CD4-positive, alpha-beta memory T cell (primary cell): ENCODE measurements at regions of chr7 and their contacts with region 1.

Region 1: DNA sequence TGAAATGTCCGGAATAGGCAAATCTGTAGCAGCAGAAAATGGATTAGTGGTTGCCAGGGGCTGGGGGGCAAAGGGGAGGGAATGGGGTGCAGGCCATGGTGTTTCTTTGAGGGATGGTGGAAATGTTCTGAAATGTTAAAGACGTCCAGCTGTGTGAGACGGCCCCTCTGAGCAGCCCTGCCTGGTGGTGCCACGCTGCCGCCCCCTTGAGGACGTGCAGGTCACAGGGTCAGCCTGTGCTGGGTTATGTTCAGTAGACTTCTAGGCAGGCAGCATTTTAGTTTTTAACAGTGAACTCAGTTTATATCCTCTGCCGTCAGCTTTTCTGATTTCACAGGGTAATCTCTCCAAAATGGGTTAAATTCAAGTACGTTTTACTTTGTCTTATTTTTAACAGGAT is 9.4 kb downstream of the NUB1 start:
- DNase-seq: no peak
- H3K4me3 ChIP-seq: no peak overlapping the region
- H3K4me3 Mint-ChIP-seq: peak overlapping the region; percentile 32 to 82 (median 73)
- H3K27ac ChIP-seq: peak overlapping the region; percentile 65
- H3K27ac Mint-ChIP-seq: peak overlapping the region; percentile 78 to 95 (median 89)
- H3K4me1 ChIP-seq: peaks cover 38% of the 10 kb centered on the region
- H3K4me1 Mint-ChIP-seq: peaks cover 33 to 61% (median 47%) of the 10 kb centered on the region in 4 donors
- H3K27me3 ChIP-seq: no peaks in the 10 kb centered on the region
- H3K27me3 Mint-ChIP-seq: no peaks in the 10 kb centered on the region

Region 2: DNA sequence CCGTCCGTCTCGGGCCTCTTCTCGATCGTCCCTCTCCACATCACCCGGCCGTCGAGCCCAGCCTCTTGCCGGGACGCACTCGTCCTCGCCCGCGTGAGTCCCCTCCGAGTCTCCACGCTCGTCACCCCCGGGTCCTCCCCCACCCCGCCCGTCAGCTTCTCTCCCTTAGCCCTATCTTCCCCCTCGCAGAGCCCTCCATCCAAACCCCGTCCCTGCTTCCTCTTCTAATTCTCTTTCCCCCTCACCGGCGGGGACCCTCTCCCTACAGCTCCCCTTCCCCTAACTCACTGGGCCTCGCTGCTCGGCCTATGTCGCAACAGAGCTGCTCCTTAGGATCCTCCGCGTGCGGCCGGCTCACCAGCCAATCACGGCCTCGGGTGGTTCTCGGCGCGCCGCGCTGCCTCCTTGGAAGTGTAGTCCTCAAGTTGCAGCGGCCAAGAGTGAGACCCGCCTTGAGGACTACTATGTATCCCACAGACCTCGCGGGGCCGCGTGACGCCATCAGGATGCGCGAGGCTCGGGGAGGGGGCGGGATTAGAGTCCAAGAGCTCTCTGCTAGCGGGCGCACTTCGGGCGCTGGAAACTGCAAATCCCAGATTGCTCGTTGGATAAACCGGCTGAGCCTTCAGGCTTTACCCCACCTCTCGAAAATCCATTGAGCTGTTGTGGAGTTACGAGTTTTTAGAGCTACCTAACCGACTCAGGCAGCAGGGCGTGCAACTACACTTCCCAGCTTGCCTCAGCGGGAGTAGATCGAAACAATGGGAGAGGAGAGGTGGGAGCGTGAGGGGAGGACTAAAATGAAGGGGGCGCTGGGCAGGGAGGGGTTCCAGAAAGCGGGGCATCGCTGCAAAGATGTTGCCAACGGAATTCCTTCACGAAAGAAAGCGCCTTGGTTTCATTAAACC is 123.9 kb before region 1 on chr7 and contains the start of gene ABCF2:
- CTCF ChIA-PET with region 1: no interaction called
- POLR2A ChIA-PET with region 1: no interaction called
- intact Hi-C with region 1: loop called (anchors 2 kb)
- DNase-seq: peak; percentile 94 to 99 (median 95)
- H3K4me3 ChIP-seq: peak within 1 kb of the TSS; percentile 62 to 80
- H3K4me3 Mint-ChIP-seq: peak within 1 kb of the TSS; percentile 95 to 100 (median 96)
- H3K27ac ChIP-seq: peak within 1 kb of the TSS; percentile 83
- H3K27ac Mint-ChIP-seq: peak within 1 kb of the TSS; percentile 95 to 98 (median 96)
- H3K4me1 ChIP-seq: peaks cover 34% of the 10 kb centered on the region
- H3K4me1 Mint-ChIP-seq: peaks cover 29 to 52% (median 40%) of the 10 kb centered on the region in 4 donors
- H3K27me3 ChIP-seq: no peaks in the 10 kb centered on the region
- H3K27me3 Mint-ChIP-seq: no peaks in the 10 kb centered on the region
- total RNA-seq, gene ABCF2: 31.4 to 35.7 TPM

Region 3: GRCh38 chr7:151304856-151305255 is 46.2 kb before region 1 on chr7:
- CTCF ChIA-PET with region 1: interaction called, 24 read pairs
- POLR2A ChIA-PET with region 1: interaction called, 11 read pairs
- intact Hi-C with region 1: no loop called
- DNase-seq: no peak
- H3K4me3 ChIP-seq: no peak overlapping the region
- H3K4me3 Mint-ChIP-seq: peak overlapping the region in 6 of 8 donors; percentile 35 to 71 (median 56)
- H3K27ac ChIP-seq: no peak overlapping the region
- H3K27ac Mint-ChIP-seq: peak overlapping the region in 2 of 7 donors; percentile 41 to 69
- H3K4me1 ChIP-seq: peaks cover 5% of the 10 kb centered on the region
- H3K4me1 Mint-ChIP-seq: peaks cover 3 to 12% (median 8%) of the 10 kb centered on the region in 4 donors
- H3K27me3 ChIP-seq: peaks cover 7% of the 10 kb centered on the region
- H3K27me3 Mint-ChIP-seq: peaks cover 23 to 31% of the 10 kb centered on the region in 2 donors

Region 4: GRCh38 chr7:151368136-151368571 is 17.1 kb after region 1 on chr7:
- CTCF ChIA-PET with region 1: interaction called, 36 read pairs
- POLR2A ChIA-PET with region 1: interaction called, 8 read pairs
- intact Hi-C with region 1: no loop called
- DNase-seq: peak; percentile 74 to 81 (median 75)
- H3K4me3 ChIP-seq: no peak overlapping the region
- H3K4me3 Mint-ChIP-seq: peak overlapping the region in 1 of 8 donors; percentile 38
- H3K27ac ChIP-seq: no peak overlapping the region
- H3K27ac Mint-ChIP-seq: peak overlapping the region in 6 of 7 donors; percentile 44 to 92 (median 88)
- H3K4me1 ChIP-seq: peaks cover 10% of the 10 kb centered on the region
- H3K4me1 Mint-ChIP-seq: peaks cover 6 to 16% (median 10%) of the 10 kb centered on the region in 4 donors
- H3K27me3 ChIP-seq: no peaks in the 10 kb centered on the region
- H3K27me3 Mint-ChIP-seq: no peaks in the 10 kb centered on the region

Region 5: GRCh38 chr7:151408839-151409666 is 58.0 kb after region 1 on chr7:
- CTCF ChIA-PET with region 1: interaction called, 5 read pairs
- POLR2A ChIA-PET with region 1: interaction called, 7 read pairs
- intact Hi-C with region 1: loop called (anchors 1 kb)
- DNase-seq: peak; percentile 85 to 95 (median 95)
- H3K4me3 ChIP-seq: peak overlapping the region; percentile 9 to 58
- H3K4me3 Mint-ChIP-seq: peak overlapping the region; percentile 79 to 89 (median 84)
- H3K27ac ChIP-seq: peak overlapping the region; percentile 89
- H3K27ac Mint-ChIP-seq: peak overlapping the region; percentile 81 to 99 (median 99)
- H3K4me1 ChIP-seq: peaks cover 41% of the 10 kb centered on the region
- H3K4me1 Mint-ChIP-seq: peaks cover 20 to 80% (median 32%) of the 10 kb centered on the region in 4 donors
- H3K27me3 ChIP-seq: no peaks in the 10 kb centered on the region
- H3K27me3 Mint-ChIP-seq: peaks cover 1 to 3% of the 10 kb centered on the region in 2 donors

Region 6: DNA sequence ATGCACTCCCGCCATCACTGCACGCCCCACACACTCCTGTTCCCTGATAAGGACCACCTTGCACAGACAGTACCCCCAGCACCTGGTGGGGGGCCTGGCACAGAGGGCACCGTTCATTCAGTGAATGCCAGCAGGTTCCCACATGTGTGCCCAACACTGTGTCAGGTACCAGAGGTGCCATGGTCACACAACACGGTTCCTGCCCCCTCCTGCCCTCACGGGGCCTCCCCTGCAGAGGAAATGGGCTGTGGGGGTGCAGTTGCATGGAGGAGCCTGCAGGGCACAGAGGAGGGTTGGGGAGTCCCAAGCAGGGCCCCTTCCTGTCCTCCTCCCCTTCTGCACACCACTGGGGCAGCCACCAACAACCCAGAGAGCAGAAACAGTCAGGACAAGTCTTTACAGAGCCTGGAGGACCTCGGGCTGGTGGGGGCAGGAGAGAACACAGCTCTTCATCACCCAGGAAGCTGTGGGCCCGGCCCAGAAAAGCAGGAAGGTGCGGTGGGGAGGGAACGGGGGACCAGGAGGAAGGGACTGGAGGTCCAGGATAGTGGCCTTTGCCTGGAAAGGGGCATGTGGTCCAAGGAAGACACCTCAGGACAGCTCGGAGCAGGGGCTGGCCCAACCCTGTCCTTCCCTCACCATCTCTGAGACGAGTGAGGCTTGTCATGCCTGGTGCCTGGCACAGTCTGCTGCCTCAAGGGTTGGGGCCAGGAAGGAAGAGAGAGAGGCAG is 81.9 kb after region 1 on chr7:
- CTCF ChIA-PET with region 1: interaction called, 3 read pairs
- POLR2A ChIA-PET with region 1: interaction called, 4 read pairs
- intact Hi-C with region 1: loop called (anchors 5 kb)
- DNase-seq: peak; percentile 54 to 71 (median 63)
- H3K4me3 ChIP-seq: no peak overlapping the region
- H3K4me3 Mint-ChIP-seq: peak overlapping the region; percentile 46 to 85 (median 64)
- H3K27ac ChIP-seq: peak overlapping the region; percentile 58
- H3K27ac Mint-ChIP-seq: peak overlapping the region; percentile 80 to 94 (median 89)
- H3K4me1 ChIP-seq: peaks cover 63% of the 10 kb centered on the region
- H3K4me1 Mint-ChIP-seq: peaks cover 37 to 64% (median 51%) of the 10 kb centered on the region in 4 donors
- H3K27me3 ChIP-seq: no peaks in the 10 kb centered on the region
- H3K27me3 Mint-ChIP-seq: no peaks in the 10 kb centered on the region

Region 7: GRCh38 chr7:152145853-152146466 is 794.9 kb after region 1 on chr7:
- CTCF ChIA-PET with region 1: no interaction called
- POLR2A ChIA-PET with region 1: no interaction called
- intact Hi-C with region 1: no loop called
- DNase-seq: peak in 4 of 5 donors; percentile 41 to 45 (median 44)
- H3K4me3 ChIP-seq: peak overlapping the region in 1 of 2 donors; percentile 2
- H3K4me3 Mint-ChIP-seq: peak overlapping the region in 6 of 8 donors; percentile 46 to 83 (median 72)
- H3K27ac ChIP-seq: no peak overlapping the region
- H3K27ac Mint-ChIP-seq: peak overlapping the region; percentile 48 to 95 (median 89)
- H3K4me1 ChIP-seq: peaks cover 47% of the 10 kb centered on the region
- H3K4me1 Mint-ChIP-seq: peaks cover 38 to 48% (median 42%) of the 10 kb centered on the region in 4 donors
- H3K27me3 ChIP-seq: no peaks in the 10 kb centered on the region
- H3K27me3 Mint-ChIP-seq: no peaks in the 10 kb centered on the region